Gastrocnemius medialis (tissue), 4 donors: ENCODE measurements at regions of chr15 and their contacts with region 1.

Region 1: DNA sequence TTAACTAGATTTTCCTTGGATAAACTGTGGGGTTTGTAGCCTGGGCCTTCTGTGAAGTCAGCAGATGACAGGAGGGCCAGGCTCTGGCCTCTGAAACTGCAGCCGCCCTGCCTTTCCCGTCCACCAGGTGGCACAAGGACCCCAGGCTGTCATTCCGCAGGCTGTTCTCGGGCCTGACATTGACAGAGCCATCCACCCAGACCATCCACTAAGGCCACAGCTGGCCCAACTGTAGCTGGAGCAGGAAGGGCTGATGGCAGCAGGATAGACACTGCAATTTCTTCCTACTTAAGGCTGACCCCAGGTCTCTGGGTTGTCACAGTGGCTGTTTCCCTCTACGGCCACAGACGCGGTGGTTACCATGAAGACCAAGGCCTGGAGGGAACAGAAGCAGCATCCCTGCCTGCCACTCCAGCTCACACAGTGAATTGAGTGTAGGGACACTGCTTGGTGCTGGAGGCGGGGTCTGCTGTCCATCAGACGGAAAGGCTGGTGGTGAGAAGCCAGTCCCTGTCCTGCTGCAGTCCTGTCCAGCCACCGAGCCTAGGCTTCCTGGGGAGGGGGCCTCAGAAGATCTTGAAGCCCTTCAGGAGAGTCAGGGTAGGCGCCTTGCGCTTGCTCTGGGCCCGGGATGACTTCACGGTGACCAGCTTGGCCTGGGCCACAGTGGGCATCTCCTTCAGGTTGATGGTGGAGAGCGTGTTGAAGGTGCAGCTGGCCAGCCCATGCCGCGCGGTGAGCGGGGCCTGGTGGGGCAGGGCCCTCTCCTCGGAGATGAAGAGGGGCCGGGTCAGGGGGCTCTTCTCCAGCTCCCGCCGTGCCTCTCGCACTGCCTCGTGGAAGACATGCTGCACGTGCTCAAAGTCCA is 9.4 kb downstream of the SLC51B start:
- DNase-seq: peak; percentile 53 to 67
- ATAC-seq: peak; percentile 65 to 89
- H3K4me3 ChIP-seq: no peak overlapping the region
- H3K27ac ChIP-seq: peak overlapping the region in 2 of 4 donors; percentile 27 to 58
- H3K4me1 ChIP-seq: peaks cover 2 to 10% of the 10 kb centered on the region in 2 donors
- H3K27me3 ChIP-seq: no peaks in the 10 kb centered on the region
- CTCF ChIP-seq: peak; percentile 90 to 97 (median 91)
- POLR2A ChIP-seq: no peak

Region 2: GRCh38 chr15:64284042-64284441 is 770.5 kb before region 1 on chr15:
- in situ Hi-C with region 1: no loop called
- intact Hi-C with region 1: no loop called
- DNase-seq: no peak
- ATAC-seq: no peak
- H3K4me3 ChIP-seq: no peak overlapping the region
- H3K27ac ChIP-seq: no peak overlapping the region
- H3K4me1 ChIP-seq: peaks cover 6 to 8% of the 10 kb centered on the region in 2 donors
- H3K27me3 ChIP-seq: no peaks in the 10 kb centered on the region
- CTCF ChIP-seq: no peak
- POLR2A ChIP-seq: no peak

Region 3: DNA sequence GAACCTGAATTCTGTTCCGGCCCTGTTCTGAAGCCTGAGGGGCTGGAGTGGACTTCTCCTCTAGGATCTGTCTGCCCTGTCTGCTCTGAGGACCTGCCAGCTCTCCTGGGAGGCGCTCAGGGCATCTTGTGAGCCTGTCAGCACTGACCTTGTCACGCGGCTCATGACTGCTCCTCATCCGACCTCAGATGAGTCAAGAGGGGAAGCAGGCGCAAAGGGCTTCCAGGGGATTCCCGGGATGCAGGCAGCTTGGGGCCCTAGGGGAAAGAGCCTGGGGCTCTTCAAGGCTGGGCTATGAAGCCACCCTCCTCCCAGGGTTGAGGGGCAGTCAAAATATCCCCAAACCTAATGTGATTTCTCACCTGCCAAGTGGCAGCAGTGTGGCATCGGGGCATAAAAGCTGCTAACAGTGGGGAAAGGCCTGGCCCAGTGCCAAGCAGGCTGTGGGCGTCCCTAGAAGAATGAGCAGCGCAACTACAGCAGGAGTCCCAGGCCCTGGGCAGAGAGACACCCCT is 170.5 kb before region 1 on chr15:
- in situ Hi-C with region 1: no loop called
- intact Hi-C with region 1: no loop called
- DNase-seq: peak; percentile 48 to 57
- ATAC-seq: peak; percentile 63 to 73
- H3K4me3 ChIP-seq: no peak overlapping the region
- H3K27ac ChIP-seq: peak overlapping the region in 3 of 4 donors; percentile 18 to 46 (median 34)
- H3K4me1 ChIP-seq: no peaks in the 10 kb centered on the region
- H3K27me3 ChIP-seq: no peaks in the 10 kb centered on the region
- CTCF ChIP-seq: no peak
- POLR2A ChIP-seq: peak in 1 of 2 donors; percentile 10

Region 4: GRCh38 chr15:65077981-65078352 is 23.4 kb after region 1 on chr15:
- in situ Hi-C with region 1: no loop called
- intact Hi-C with region 1: loop called (anchors 1 kb)
- DNase-seq: peak; percentile 61 to 73
- ATAC-seq: peak; percentile 63 to 64
- H3K4me3 ChIP-seq: peak overlapping the region; percentile 7 to 46 (median 26)
- H3K27ac ChIP-seq: peak overlapping the region; percentile 37 to 93 (median 88)
- H3K4me1 ChIP-seq: peaks cover 21 to 24% of the 10 kb centered on the region in 2 donors
- H3K27me3 ChIP-seq: no peaks in the 10 kb centered on the region
- CTCF ChIP-seq: peak; percentile 49 to 80 (median 66)
- POLR2A ChIP-seq: no peak

Region 5: GRCh38 chr15:65086017-65086679 is 31.6 kb after region 1 on chr15:
- in situ Hi-C with region 1: loop called in 1 of 4 experiments (anchors 5 kb)
- intact Hi-C with region 1: no loop called
- DNase-seq: no peak
- ATAC-seq: no peak
- H3K4me3 ChIP-seq: no peak overlapping the region
- H3K27ac ChIP-seq: peak overlapping the region in 1 of 4 donors; percentile 81
- H3K4me1 ChIP-seq: peaks cover 41 to 42% of the 10 kb centered on the region in 2 donors
- H3K27me3 ChIP-seq: no peaks in the 10 kb centered on the region
- CTCF ChIP-seq: peak in 3 of 5 experiments; percentile 26 to 44 (median 36)
- POLR2A ChIP-seq: no peak

Region 6: GRCh38 chr15:65101411-65101890 is 46.9 kb after region 1 on chr15:
- in situ Hi-C with region 1: no loop called
- intact Hi-C with region 1: loop called (anchors 1 kb)
- DNase-seq: peak in 1 of 2 donors; percentile 42
- ATAC-seq: peak in 1 of 2 donors; percentile 69
- H3K4me3 ChIP-seq: no peak overlapping the region
- H3K27ac ChIP-seq: no peak overlapping the region
- H3K4me1 ChIP-seq: peaks cover 0 to 3% of the 10 kb centered on the region in 2 donors
- H3K27me3 ChIP-seq: no peaks in the 10 kb centered on the region
- CTCF ChIP-seq: peak; percentile 50 to 76 (median 63)
- POLR2A ChIP-seq: no peak

Region 7: DNA sequence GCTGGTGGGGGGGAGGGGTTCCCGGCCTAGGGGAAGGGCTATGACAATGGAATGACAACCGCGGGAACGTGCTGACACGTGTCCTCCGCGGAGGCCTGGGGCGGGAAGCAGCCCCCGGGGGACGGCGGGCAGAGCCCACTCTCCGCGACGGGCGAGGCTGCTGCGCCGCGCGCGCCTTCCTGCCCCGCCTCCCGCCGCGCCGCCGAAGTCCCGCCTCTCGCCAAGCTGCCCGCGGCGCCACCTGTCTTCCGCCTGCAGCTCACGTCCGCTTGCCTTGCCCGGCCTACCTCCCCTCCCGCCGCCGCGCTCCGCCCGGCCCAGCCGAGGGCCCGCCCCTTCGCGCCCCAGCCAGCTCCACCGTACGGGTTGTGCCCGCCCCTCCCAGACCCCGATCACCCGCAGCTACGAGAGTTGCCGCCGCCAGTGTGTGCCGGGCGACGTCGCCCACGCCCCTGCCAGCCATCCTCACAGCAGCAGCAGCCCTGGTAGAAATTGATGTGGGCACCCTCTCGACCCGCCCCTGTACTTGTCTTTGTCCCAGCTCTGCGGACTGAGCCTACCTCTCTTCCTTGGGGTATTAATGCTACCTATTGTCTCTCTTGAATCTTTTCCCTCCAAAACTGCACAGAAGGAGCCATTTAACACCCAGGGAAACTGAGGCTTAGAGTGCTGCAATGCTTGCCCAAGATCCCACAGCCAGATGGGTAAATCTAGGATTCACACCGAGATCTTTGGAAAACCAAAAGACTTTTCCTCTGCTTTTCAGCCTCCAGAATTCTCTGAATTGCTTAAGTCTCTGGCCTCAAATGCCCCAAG is 232.3 kb after region 1 on chr15 and contains the start of gene PARP16:
- in situ Hi-C with region 1: loop called in 3 of 4 experiments (anchors 25 kb)
- intact Hi-C with region 1: loop called (anchors 5 kb)
- DNase-seq: peak; percentile 89 to 92
- ATAC-seq: peak; percentile 90
- H3K4me3 ChIP-seq: peak within 1 kb of the TSS; percentile 74 to 91 (median 87)
- H3K27ac ChIP-seq: peak within 1 kb of the TSS; percentile 96 to 99 (median 98)
- H3K4me1 ChIP-seq: peaks cover 9 to 11% of the 10 kb centered on the region in 2 donors
- H3K27me3 ChIP-seq: no peaks in the 10 kb centered on the region
- CTCF ChIP-seq: peak in 4 of 5 experiments; percentile 43 to 83 (median 71)
- POLR2A ChIP-seq: peak; percentile 85 to 92
- total RNA-seq, gene PARP16: 2.6 to 3.3 (median 3.0) TPM